ENCODE measurements at regions of chr16 and their contacts with region 1.

Region 1: DNA sequence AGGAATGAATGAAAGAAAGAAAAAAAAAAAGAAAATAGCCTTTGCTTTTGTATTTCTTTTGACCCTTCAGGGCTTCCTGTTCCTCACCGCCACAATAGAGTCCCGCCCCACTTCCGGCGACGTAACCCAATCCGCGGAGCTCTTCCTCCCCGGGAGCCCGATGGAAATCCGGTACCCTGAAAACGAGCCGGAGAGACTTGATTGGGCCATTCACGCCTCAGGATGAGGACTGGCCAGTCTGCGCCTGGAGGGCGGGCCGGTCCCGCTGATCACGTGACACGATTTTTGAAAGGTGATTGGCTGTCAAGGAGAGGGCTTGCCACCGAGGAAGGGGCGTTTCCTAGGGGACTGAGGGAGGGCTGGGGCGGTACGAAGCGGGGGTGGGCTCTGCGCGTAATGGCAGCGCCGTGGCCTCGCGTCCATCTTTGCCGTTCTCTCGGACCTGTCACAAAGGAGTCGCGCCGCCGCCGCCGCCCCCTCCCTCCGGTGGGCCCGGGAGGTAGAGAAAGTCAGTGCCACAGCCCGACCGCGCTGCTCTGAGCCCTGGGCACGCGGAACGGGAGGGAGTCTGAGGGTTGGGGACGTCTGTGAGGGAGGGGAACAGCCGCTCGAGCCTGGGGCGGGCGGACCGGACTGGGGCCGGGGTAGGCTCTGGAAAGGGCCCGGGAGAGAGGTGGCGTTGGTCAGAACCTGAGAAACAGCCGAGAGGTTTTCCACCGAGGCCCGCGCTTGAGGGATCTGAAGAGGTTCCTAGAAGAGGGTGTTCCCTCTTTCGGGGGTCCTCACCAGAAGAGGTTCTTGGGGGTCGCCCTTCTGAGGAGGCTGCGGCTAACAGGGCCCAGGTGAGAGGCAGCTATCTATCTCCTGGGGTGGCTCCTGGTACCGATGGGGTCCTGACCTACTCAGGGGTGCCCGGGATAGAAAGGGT is at the starts of genes PSME3IP1 and RSPRY1:
- DNase-seq: peak; percentile 99
- ATAC-seq: peak; percentile 96
- H3K4me3 Mint-ChIP-seq: peak within 1 kb of the TSS; percentile 100
- H3K27ac Mint-ChIP-seq: peak within 1 kb of the TSS; percentile 97
- H3K4me1 Mint-ChIP-seq: peaks cover 37% of the 10 kb centered on the region
- H3K27me3 Mint-ChIP-seq: no peaks in the 10 kb centered on the region
- total RNA-seq, gene PSME3IP1: 111 to 156 TPM
- total RNA-seq, gene RSPRY1: 24.6 to 30.2 TPM

Region 2: DNA sequence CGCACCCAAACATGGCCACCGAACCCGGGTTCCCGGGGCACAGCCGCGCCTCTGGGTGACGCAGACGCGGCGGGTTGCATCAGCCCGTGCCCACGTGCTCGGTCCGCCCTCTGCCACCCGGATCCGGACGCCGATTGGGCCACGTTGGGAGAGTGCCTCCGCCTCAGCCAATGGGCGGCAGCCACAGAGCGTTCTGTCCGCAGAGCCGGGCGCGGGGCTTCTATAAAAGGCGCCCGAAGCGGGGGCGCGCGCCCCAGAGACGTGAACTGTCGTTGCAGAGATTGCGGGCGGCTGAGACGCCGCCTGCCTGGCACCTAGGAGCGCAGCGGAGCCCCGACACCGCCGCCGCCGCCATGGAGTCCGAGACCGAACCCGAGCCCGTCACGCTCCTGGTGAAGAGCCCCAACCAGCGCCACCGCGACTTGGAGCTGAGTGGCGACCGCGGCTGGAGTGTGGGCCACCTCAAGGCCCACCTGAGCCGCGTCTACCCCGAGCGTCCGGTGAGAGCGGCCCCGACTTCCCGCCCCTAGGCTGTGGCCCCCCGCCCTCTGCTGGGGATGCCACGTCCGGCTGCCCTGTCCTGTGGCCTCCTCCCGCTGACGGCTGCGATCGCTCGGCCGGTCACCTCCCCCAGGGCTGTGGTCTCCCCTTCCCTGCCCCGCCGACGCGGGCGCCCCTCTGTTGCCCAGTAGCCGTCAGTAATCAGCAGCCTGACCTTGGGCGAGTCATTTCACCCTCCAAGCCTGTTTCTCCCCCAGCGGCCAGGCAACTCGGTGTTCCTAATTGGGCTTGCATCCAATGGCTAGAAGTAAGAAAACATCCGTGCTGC is 254.1 kb before region 1 on chr16 and contains the start of gene HERPUD1:
- CTCF ChIA-PET with region 1: interaction called, 4 read pairs
- POLR2A ChIA-PET with region 1: interaction called, 5 read pairs
- intact Hi-C with region 1: loop called in 1 of 2 experiments (anchors 1 kb)
- DNase-seq: peak; percentile 100
- ATAC-seq: peak; percentile 94
- H3K4me3 Mint-ChIP-seq: peak within 1 kb of the TSS; percentile 98
- H3K27ac Mint-ChIP-seq: peak within 1 kb of the TSS; percentile 95
- H3K4me1 Mint-ChIP-seq: peaks cover 40% of the 10 kb centered on the region
- H3K27me3 Mint-ChIP-seq: no peaks in the 10 kb centered on the region
- total RNA-seq, gene HERPUD1: 136 to 195 TPM

Region 3: DNA sequence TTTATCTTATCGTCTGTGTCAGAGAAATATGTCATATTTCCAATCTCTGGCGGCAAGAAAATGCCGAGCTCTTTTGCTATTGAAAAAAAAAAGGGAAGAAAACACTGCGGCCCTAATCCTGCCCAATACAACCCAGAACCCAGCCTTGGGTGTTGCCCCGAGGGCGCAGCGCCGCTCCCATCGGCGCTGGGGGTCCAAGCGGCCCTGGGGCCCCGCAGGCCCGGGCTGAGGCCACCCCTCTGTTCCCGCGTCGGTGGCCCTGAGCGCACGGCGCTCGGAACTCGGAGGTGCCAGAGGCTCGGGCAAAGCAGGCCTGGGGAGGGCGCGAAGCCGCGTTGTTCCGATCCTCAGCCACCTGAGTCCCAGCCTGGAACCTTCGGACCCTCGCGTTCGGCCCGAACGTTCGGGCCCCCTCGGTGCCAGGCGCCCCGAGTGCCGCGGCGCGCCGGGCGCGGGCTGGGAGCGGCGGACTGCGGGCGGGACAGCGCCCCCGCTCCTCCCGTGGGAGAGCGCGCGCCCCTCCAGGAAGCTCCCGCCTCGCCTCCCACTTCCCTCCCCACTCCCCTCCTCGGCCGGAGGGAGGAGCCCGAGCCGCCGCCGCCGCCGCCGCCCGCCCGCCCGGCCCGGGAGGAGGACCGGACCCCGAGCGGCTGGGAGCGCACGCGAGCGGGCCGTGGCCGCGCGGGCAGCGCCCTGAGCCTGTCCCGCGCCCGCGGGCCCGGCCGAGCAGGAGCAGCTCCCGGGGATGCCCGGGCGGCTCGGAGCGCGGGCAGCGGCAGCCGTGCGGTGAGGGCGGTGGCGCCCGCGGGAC is 94.0 kb before region 1 on chr16 and contains the start of gene CPNE2:
- CTCF ChIA-PET with region 1: interaction called, 7 read pairs
- POLR2A ChIA-PET with region 1: no interaction called
- intact Hi-C with region 1: loop called in 1 of 2 experiments (anchors 1 kb)
- DNase-seq: peak; percentile 56
- ATAC-seq: peak; percentile 55
- H3K4me3 Mint-ChIP-seq: peak within 1 kb of the TSS; percentile 68
- H3K27ac Mint-ChIP-seq: no peak within 1 kb of the TSS
- H3K4me1 Mint-ChIP-seq: peaks cover 5% of the 10 kb centered on the region
- H3K27me3 Mint-ChIP-seq: peaks cover 14% of the 10 kb centered on the region
- total RNA-seq, gene CPNE2: 4.9 to 7.3 TPM

Region 4: GRCh38 chr16:57300387-57301125 is 114.3 kb after region 1 on chr16:
- CTCF ChIA-PET with region 1: interaction called, 12 read pairs
- POLR2A ChIA-PET with region 1: no interaction called
- intact Hi-C with region 1: loop called (anchors 1 to 5 kb)
- DNase-seq: peak; percentile 99
- ATAC-seq: peak; percentile 89
- H3K4me3 Mint-ChIP-seq: no peak overlapping the region
- H3K27ac Mint-ChIP-seq: no peak overlapping the region
- H3K4me1 Mint-ChIP-seq: peaks cover 3% of the 10 kb centered on the region
- H3K27me3 Mint-ChIP-seq: no peaks in the 10 kb centered on the region

Region 5: GRCh38 chr16:57535680-57536305 is 349.6 kb after region 1 on chr16:
- CTCF ChIA-PET with region 1: no interaction called
- POLR2A ChIA-PET with region 1: no interaction called
- intact Hi-C with region 1: loop called in 1 of 2 experiments (anchors 1 kb)
- DNase-seq: peak; percentile 97
- ATAC-seq: peak; percentile 80
- H3K4me3 Mint-ChIP-seq: peak overlapping the region; percentile 78
- H3K27ac Mint-ChIP-seq: peak overlapping the region; percentile 94
- H3K4me1 Mint-ChIP-seq: peaks cover 70% of the 10 kb centered on the region
- H3K27me3 Mint-ChIP-seq: no peaks in the 10 kb centered on the region

Measured in activated CD4-positive, alpha-beta T cell treated with anti-CD3 and anti-CD28 coated beads for 36 hours (primary cell).